Lower leg skin (tissue), 4 donors: ENCODE measurements at regions of chr4 and their contacts with region 1.

Region 1: DNA sequence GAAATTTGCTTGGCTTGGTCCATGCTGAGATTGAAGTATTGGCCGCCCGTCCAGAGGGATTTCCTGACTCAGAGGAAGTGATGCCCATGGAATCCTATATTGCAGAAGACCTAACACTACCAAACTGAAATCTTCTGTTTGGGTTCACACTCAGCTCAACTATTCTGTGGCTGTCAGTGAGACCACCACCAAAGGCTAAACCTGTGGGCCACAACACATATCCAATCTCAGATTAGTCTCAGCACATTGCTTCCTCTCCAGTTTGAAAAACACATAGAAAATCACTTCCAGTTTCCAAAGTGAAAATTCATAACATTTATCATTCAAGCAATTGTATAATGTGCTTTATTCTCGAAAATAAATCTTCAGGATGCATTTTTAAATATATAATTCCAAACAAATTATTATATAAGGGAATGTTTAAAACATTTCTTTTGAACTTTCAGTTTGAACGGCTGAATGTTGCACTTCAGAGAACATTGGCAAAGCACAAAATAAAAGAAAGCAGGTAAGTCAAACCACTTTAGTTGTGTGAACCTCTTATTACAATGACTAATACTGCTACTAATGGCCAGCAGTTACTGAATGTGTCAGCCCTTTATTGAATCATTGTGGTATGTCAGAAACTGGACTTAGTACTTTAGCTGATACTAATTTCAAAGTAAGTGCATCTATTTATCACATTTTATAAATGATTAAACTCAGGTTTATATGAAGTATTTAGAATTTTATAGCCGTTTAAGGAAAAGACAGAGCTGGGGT is 37.0 kb downstream of the GUCY1A1 start:
- DNase-seq: no peak
- H3K4me3 ChIP-seq: no peak overlapping the region
- CTCF ChIP-seq: no peak
- POLR2A ChIP-seq: no peak

Region 2: GRCh38 chr4:155643087-155643486 is 60.6 kb before region 1 on chr4:
- intact Hi-C with region 1: loop called (anchors 2 kb)
- DNase-seq: no peak
- H3K4me3 ChIP-seq: no peak overlapping the region
- CTCF ChIP-seq: no peak
- POLR2A ChIP-seq: no peak

Region 3: DNA sequence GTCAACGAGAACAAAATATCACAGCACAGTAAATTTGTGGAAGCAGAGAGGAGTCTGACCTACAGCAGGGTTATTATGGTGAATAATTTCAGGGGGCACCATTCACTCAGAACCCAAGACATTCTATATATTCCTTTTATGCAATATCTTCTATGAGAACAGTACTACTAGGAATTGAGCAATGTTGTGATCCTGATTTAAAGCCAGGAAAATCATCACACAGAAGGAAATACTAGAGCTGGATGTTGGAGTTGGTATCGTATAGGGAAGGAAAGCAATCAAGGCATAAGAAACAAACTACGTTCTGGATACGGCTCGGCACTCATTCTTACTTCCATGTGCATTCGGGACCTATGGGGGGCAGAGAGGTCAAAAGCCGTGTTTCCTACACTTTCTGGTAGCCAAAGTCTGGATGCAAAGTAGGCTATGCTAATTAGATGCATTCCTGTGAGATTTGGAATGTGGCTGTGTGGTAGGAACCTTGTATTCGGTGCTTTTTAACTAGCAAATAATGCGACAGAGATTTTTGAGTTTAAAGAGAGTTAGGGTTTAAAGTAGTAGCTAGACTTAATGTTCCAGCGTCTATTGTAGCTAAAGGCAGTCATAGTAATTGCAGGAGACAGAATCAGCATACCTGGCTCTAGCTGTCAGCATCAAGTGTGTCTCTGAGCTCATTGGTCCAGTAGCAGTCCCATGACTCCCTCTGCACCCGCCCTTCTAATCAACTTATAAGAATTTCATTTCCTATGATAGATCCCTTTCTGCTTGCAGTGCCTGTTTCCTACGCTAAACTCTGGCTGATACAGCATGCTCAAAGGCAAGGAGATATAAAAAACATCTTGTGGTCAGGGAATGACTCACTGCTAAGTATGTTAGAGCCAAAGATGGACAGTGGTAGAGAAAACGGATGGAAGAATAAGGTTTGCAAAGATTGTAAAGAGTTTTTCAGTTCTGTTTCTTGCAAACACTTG is 1311.2 kb after region 1 on chr4:
- intact Hi-C with region 1: loop called (anchors 5 kb)
- DNase-seq: no peak
- H3K4me3 ChIP-seq: no peak overlapping the region
- CTCF ChIP-seq: no peak
- POLR2A ChIP-seq: no peak